AG04449 (cell line): ENCODE measurements at regions of chrX and their contacts with region 1.

Region 1: GRCh38 chrX:20252381-20253231 is 14.1 kb downstream of the RPS6KA3 start:
- DNase-seq: no peak
- H3K4me3 ChIP-seq: no peak overlapping the region
- CTCF ChIP-seq: peak; percentile 68

Region 2: GRCh38 chrX:19303256-19303880 is 949.2 kb before region 1 on chrX:
- CTCF ChIA-PET with region 1: no interaction called
- POLR2A ChIA-PET with region 1: no interaction called
- DNase-seq: peak; percentile 1
- H3K4me3 ChIP-seq: no peak overlapping the region
- CTCF ChIP-seq: no peak

Region 3: GRCh38 chrX:19811807-19812604 is 440.6 kb before region 1 on chrX:
- CTCF ChIA-PET with region 1: no interaction called
- POLR2A ChIA-PET with region 1: no interaction called
- DNase-seq: no peak
- H3K4me3 ChIP-seq: no peak overlapping the region
- CTCF ChIP-seq: no peak

Region 4: GRCh38 chrX:20066968-20067708 is 185.5 kb before region 1 on chrX:
- CTCF ChIA-PET with region 1: no interaction called
- POLR2A ChIA-PET with region 1: no interaction called
- DNase-seq: no peak
- H3K4me3 ChIP-seq: no peak overlapping the region; the same call in 1 of the 2 replicates
- CTCF ChIP-seq: peak; percentile 28

Region 5: GRCh38 chrX:20217275-20217674 is 35.3 kb before region 1 on chrX:
- CTCF ChIA-PET with region 1: no interaction called
- POLR2A ChIA-PET with region 1: no interaction called
- DNase-seq: no peak
- H3K4me3 ChIP-seq: no peak overlapping the region
- CTCF ChIP-seq: no peak

Region 6: GRCh38 chrX:20442597-20442996 is 190.0 kb after region 1 on chrX:
- CTCF ChIA-PET with region 1: interaction called, 35 read pairs
- POLR2A ChIA-PET with region 1: no interaction called
- DNase-seq: no peak
- H3K4me3 ChIP-seq: no peak overlapping the region
- CTCF ChIP-seq: peak; percentile 47

Region 7: DNA sequence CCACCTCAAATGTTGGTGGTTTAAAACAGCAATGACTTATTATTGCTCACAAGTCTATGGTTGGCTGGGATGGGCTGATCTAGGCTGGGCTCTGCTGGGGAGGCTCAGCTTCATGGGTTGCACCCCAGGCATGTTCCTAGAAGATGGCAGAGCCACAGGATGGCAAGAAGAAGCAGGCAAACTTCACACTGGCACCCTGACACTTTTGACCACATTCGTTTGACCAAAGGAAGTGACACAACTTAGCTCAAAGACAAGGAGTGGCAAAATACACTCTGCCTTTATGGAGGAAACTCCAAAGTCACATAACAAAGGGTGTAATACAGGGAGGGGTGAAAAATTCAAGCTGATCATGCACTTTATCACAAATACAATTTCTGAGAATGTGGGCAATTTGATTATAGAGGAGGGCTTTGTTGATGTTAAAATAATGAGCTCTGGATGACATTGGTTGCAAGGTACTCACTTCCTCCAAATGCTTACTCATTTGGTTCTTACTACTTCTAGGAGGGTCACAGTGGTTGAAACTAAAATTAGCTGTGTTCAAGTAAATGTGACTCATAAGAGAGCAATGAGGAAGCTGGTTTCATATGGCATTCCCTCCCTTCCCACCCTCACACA is 263.3 kb after region 1 on chrX:
- CTCF ChIA-PET with region 1: interaction called, 10 read pairs
- POLR2A ChIA-PET with region 1: no interaction called
- DNase-seq: peak; percentile 51
- H3K4me3 ChIP-seq: no peak overlapping the region
- CTCF ChIP-seq: no peak